PC-3 (cell line): ENCODE measurements at regions of chr16 and their contacts with region 1.

Region 1: GRCh38 chr16:87636072-87636684 is 33.9 kb downstream of the JPH3 start:
- DNase-seq: peak; percentile 76
- ATAC-seq: peak; percentile 88
- H3K4me3 ChIP-seq: peak overlapping the region; percentile 72
- H3K27ac ChIP-seq: no peak overlapping the region
- H3K4me1 ChIP-seq: peaks cover 3% of the 10 kb centered on the region; the same call in 1 of the 2 replicates
- H3K27me3 ChIP-seq: peaks cover 20% of the 10 kb centered on the region
- CTCF ChIP-seq: peak; percentile 69

Region 2: DNA sequence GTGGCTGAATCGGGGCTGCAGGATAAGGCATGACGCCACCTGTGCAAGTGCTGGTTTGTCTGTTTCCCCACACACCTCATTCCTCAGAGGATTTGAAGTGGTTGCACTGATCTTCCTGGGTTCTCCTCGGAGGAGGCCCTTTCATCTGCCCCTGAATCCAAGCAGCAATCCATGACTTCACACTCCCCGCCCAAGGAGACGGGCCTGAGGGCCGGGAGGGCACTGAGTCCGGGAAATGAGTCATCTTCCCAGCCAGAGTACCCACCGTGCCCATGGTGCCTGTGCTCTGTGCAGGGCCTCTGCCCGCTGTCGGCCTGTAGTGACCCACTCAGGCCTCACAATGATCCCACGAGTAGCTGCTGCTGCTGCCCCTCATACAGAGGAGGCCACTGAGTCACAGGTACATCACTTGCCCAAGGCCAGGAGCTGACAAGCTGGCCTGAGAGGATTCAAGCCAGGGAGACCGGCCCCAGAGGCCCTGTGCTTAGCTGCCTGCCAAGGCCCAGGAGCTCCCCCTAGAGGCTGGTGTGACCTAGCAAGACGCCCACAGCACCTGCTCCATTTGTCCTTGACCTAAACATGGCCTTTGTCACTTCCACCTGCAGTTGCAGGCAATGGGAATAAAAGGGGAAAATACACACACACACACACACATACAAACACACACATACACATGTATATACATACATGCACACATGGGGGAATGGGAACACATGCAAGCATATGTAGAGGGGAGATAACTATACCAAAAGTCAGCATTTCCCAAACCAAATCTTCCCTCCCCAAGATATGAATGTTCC is 559.0 kb before region 1 on chr16:
- CTCF ChIA-PET with region 1: no interaction called
- POLR2A ChIA-PET with region 1: no interaction called
- intact Hi-C with region 1: no loop called
- DNase-seq: peak; percentile 65
- ATAC-seq: peak; percentile 72
- H3K4me3 ChIP-seq: no peak overlapping the region
- H3K27ac ChIP-seq: no peak overlapping the region
- H3K4me1 ChIP-seq: peaks cover 6% of the 10 kb centered on the region; the same call in 1 of the 2 replicates
- H3K27me3 ChIP-seq: no peaks in the 10 kb centered on the region
- CTCF ChIP-seq: peak; percentile 81

Region 3: DNA sequence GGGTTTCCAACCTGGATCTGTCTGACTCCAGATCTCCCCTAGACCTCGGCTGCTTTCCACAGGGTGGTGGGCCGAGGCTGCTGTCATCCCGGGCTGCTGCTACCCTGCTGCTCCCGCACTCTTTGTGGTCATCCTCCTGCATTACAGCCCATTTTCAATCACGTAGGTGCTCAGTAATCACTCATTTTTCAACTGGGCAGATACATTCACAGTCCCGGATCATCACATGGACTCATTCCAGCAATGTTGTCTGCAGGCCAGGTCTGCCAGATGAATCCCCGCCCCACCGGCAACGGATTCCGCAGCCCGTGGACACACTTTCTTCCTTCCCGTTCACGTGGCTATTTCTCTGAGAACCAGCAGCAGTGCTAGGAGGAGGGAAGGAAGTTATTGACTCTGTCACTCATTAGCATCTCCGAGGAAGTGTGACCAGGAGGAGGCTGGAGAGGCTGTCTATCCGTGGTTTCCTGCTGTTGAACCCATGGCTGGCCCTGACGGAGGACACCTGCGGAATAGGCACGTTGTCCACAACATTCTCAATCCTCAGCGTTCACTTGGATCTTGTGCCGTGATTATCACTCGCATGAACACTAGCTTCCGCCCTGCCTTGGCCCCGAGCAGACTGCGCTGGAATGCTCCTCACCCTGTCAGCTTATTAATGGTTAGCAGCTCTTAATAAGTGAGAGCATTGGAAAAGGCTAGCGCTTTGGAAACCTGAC is 128.7 kb before region 1 on chr16:
- CTCF ChIA-PET with region 1: no interaction called
- POLR2A ChIA-PET with region 1: no interaction called
- intact Hi-C with region 1: no loop called
- DNase-seq: no peak
- ATAC-seq: no peak
- H3K4me3 ChIP-seq: no peak overlapping the region
- H3K27ac ChIP-seq: no peak overlapping the region
- H3K4me1 ChIP-seq: no peaks in the 10 kb centered on the region
- H3K27me3 ChIP-seq: no peaks in the 10 kb centered on the region
- CTCF ChIP-seq: no peak

Region 4: DNA sequence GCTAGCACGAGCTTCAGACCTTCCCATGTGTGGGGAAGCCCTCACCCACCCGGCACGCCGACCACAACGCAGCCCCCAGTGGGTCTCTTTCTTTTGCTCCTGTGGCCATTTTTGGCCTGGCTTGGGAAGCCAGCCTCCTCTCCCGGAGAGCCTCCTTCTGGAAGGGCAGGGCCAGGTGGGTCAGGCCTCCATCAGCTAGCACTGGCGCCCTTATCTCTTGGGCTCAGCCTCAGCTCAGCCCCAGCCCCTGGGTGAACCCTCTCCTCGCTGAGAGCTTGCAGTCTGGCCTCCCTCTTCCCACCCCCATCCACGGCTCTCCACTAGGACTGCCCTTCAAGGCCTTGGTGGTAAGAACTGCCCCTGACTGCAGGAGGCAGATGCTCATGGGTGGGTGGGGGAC is 48.5 kb before region 1 on chr16:
- CTCF ChIA-PET with region 1: interaction called, 16 read pairs
- POLR2A ChIA-PET with region 1: no interaction called
- intact Hi-C with region 1: loop called (anchors 1 kb)
- DNase-seq: no peak
- ATAC-seq: no peak
- H3K4me3 ChIP-seq: no peak overlapping the region
- H3K27ac ChIP-seq: no peak overlapping the region
- H3K4me1 ChIP-seq: peaks cover 14% of the 10 kb centered on the region
- H3K27me3 ChIP-seq: peaks cover 20% of the 10 kb centered on the region; the same call in 1 of the 2 replicates
- CTCF ChIP-seq: no peak

Region 5: DNA sequence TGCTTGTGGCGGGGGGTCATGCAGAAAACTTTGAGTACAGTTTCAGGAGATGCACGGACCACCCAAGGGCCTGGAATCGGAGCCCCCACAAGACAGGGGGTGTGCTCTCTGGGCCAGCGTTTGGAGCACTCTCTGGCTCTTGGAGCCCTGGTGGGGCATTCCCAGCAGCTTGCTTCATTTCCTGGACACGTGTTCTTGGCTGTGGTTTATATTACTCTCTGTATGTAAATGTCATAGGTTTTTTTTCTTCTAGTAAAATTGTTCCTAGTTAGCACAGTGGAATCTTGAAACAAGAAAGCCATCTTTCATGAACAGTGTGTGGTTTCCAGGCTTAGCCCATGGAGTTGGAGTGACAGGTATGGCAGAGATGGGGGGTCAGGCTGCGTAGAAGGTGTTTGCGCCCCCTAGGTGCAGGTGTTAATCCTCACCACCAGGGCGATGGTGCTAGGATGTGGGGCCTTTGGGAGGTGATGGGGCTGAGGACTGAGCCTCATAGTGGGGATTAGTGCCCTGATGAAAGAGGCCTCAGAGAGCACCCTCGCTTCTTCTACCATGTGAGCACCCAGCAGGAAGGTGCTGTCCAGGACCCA is 45.9 kb after region 1 on chr16:
- CTCF ChIA-PET with region 1: no interaction called
- POLR2A ChIA-PET with region 1: no interaction called
- intact Hi-C with region 1: no loop called
- DNase-seq: no peak
- ATAC-seq: peak; percentile 50; the same call in 1 of the 2 replicates
- H3K4me3 ChIP-seq: no peak overlapping the region
- H3K27ac ChIP-seq: no peak overlapping the region
- H3K4me1 ChIP-seq: no peaks in the 10 kb centered on the region
- H3K27me3 ChIP-seq: no peaks in the 10 kb centered on the region
- CTCF ChIP-seq: peak; percentile 52; the same call in 1 of the 2 replicates

Region 6: GRCh38 chr16:87713451-87714229 is 77.5 kb after region 1 on chr16:
- CTCF ChIA-PET with region 1: no interaction called
- POLR2A ChIA-PET with region 1: no interaction called
- intact Hi-C with region 1: no loop called
- DNase-seq: no peak
- ATAC-seq: no peak
- H3K4me3 ChIP-seq: no peak overlapping the region
- H3K27ac ChIP-seq: no peak overlapping the region
- H3K4me1 ChIP-seq: no peaks in the 10 kb centered on the region
- H3K27me3 ChIP-seq: no peaks in the 10 kb centered on the region
- CTCF ChIP-seq: no peak